ENCODE measurements at regions of chr1 and their contacts with region 1.

Region 1: GRCh38 chr1:58546520-58547308 is at the start of gene OMA1:
- DNase-seq: peak; percentile 99
- H3K4me3 ChIP-seq: peak within 1 kb of the TSS; percentile 73 to 95 (median 76)
- H3K27ac ChIP-seq: peak within 1 kb of the TSS; percentile 84
- H3K4me1 ChIP-seq: peaks cover 4% of the 10 kb centered on the region
- H3K27me3 ChIP-seq: peaks cover 3 to 4% of the 10 kb centered on the region in 2 experiments
- CTCF ChIP-seq: peak; percentile 99
- POLR2A ChIP-seq: peak; percentile 76
- total RNA-seq, gene OMA1: 4.6 and 7.7 TPM in 2 replicates

Region 2: GRCh38 chr1:56831871-56832693 is 1714.6 kb before region 1 on chr1:
- CTCF ChIA-PET with region 1: interaction called, 11 read pairs
- POLR2A ChIA-PET with region 1: no interaction called
- dilution Hi-C with region 1: no loop called
- intact Hi-C with region 1: loop called (anchors 1 kb)
- DNase-seq: peak; percentile 87
- H3K4me3 ChIP-seq: no peak overlapping the region
- H3K27ac ChIP-seq: peak overlapping the region; percentile 53
- H3K4me1 ChIP-seq: peaks cover 9% of the 10 kb centered on the region
- H3K27me3 ChIP-seq: no peaks in the 10 kb centered on the region
- CTCF ChIP-seq: peak; percentile 86 to 93
- POLR2A ChIP-seq: no peak

Region 3: GRCh38 chr1:58104960-58105359 is 441.8 kb before region 1 on chr1:
- CTCF ChIA-PET with region 1: no interaction called
- POLR2A ChIA-PET with region 1: no interaction called
- dilution Hi-C with region 1: no loop called
- intact Hi-C with region 1: no loop called
- DNase-seq: no peak
- H3K4me3 ChIP-seq: no peak overlapping the region
- H3K27ac ChIP-seq: no peak overlapping the region
- H3K4me1 ChIP-seq: no peaks in the 10 kb centered on the region
- H3K27me3 ChIP-seq: no peaks in the 10 kb centered on the region
- CTCF ChIP-seq: no peak
- POLR2A ChIP-seq: no peak

Region 4: DNA sequence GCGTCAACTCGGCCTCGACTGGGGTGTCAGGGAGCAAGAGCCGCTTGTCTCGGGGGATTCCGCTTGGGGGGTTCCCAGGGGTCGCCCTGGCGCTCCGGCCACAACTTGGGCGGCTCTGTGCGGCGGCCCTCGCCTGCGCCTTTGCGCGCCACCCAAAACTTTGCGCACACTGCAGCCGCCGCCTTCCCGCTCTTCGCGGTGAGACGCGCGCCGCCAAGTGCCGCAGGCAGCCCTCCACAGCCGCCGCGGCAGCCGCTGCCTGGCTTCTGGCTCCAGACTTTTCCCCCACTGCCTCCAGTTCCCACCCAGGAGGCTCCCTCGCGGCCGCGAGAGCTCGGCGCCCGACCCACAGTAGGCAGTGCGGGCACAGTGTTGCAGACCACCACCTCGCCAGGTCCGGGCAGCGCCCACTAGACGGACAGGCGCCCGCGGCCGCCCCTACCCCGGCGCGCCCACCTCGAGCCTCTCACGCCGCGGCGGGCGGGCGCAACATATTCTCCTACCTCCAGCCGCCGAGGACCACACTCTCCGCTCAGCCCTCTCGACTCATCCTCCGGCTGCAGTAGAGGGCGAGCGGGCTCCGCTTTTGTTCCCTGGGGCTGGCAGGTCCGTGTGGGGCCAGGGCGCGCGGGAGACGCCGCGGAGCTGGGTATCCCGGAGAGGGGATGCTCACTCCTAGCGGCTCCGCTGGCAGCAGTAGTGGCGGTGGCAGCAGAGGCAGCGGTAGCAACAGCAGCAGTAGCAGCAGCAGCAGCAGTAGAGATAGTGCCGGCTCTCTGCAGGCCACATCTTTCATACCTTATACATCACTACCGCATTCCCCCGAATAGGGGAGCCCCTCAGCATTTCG is 296.8 kb before region 1 on chr1:
- CTCF ChIA-PET with region 1: no interaction called
- POLR2A ChIA-PET with region 1: interaction called, 3 read pairs
- dilution Hi-C with region 1: no loop called
- intact Hi-C with region 1: loop called (anchors 2 kb)
- DNase-seq: peak; percentile 11
- H3K4me3 ChIP-seq: no peak overlapping the region
- H3K27ac ChIP-seq: no peak overlapping the region
- H3K4me1 ChIP-seq: no peaks in the 10 kb centered on the region
- H3K27me3 ChIP-seq: peaks cover 16 to 21% of the 10 kb centered on the region in 2 experiments
- CTCF ChIP-seq: no peak
- POLR2A ChIP-seq: no peak

Region 5: GRCh38 chr1:58266242-58266641 is 280.5 kb before region 1 on chr1:
- CTCF ChIA-PET with region 1: no interaction called
- POLR2A ChIA-PET with region 1: no interaction called
- dilution Hi-C with region 1: no loop called
- intact Hi-C with region 1: no loop called
- DNase-seq: no peak
- H3K4me3 ChIP-seq: no peak overlapping the region
- H3K27ac ChIP-seq: no peak overlapping the region
- H3K4me1 ChIP-seq: no peaks in the 10 kb centered on the region
- H3K27me3 ChIP-seq: no peaks in the 10 kb centered on the region
- CTCF ChIP-seq: no peak
- POLR2A ChIP-seq: no peak

Region 6: DNA sequence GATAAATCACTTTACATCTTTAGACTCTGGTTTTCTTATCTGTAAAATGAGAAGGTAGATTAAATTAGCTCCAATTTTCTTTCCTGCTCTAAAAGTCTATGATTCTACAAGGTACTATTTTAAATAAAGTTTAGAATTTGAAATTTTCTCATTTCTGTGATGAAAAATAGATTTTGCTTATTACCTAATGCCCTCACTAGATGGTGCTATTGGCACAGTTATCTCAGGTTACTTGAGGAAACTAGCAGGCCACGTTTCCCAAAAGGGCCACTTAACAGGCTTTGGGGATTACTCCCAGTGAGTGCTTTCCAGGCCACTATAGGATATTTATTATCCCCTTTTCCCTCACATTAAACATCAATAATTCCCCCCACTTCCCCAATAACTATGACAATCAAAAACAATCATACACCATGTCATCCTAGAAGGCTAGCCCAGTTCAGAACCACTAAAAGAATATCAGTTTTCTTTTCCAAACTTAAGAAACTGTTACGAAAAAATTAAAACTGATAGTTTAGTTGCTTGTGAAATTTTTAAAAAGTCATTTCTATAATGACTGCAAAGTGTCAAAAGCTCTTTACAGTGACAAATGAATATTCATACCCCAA is 30.8 kb before region 1 on chr1:
- CTCF ChIA-PET with region 1: interaction called, 15 read pairs
- POLR2A ChIA-PET with region 1: no interaction called
- dilution Hi-C with region 1: no loop called
- intact Hi-C with region 1: loop called (anchors 1 kb)
- DNase-seq: peak; percentile 71
- H3K4me3 ChIP-seq: no peak overlapping the region
- H3K27ac ChIP-seq: no peak overlapping the region
- H3K4me1 ChIP-seq: no peaks in the 10 kb centered on the region
- H3K27me3 ChIP-seq: no peaks in the 10 kb centered on the region
- CTCF ChIP-seq: peak; percentile 37 to 58
- POLR2A ChIP-seq: no peak

Region 7: DNA sequence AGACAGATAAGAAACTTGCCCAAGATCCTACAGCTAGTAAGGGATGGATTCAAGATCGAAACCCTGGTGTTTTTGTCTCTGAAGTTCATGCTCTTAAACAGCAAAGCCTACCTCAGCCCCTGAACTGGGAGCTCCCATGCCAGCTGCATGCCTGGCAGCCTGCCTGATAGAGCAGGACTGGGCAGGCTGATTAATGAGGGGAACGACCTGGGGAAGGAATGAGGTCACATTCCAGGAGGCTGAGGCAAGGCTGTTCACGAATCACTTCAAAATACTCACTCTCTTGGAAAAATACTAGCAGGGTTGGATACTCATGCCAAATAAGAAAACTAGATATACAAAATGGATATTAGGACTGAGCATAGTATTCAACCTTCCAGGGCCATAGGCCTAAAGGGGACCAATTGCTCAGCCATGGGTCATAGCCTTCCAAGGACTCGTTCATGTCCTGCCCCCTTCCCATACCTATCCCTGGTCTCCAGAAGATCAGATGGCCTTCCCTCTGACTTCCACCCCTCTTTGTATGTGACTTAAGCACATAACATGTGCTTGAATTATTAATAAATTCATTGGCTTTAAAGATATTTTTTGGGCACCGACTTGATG is 45.9 kb after region 1 on chr1:
- CTCF ChIA-PET with region 1: interaction called, 6 read pairs
- POLR2A ChIA-PET with region 1: no interaction called
- dilution Hi-C with region 1: no loop called
- intact Hi-C with region 1: loop called (anchors 2 kb)
- DNase-seq: peak; percentile 98
- H3K4me3 ChIP-seq: no peak overlapping the region
- H3K27ac ChIP-seq: peak overlapping the region; percentile 91
- H3K4me1 ChIP-seq: peaks cover 22% of the 10 kb centered on the region
- H3K27me3 ChIP-seq: no peaks in the 10 kb centered on the region
- CTCF ChIP-seq: no peak
- POLR2A ChIP-seq: peak; percentile 79

Region 8: DNA sequence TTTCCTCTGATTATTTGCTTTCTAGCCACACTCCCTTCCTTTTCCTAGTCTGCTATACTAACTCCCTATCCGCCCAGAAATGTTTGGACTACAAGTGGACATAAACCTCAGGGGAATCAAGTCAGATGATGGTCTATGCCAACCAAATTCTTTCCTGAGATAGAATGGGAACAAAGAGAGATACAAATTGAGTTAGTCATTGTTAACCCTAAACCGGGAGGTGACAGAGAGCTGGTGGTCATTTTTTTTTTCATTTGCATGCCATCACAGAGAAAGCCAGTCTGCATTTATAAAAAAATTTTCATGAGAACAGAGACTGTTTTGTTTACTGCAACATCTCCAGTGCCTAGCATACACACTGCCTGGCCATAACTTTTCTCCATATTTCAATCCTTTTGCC is 118.2 kb after region 1 on chr1:
- CTCF ChIA-PET with region 1: interaction called, 11 read pairs
- POLR2A ChIA-PET with region 1: no interaction called
- dilution Hi-C with region 1: no loop called
- intact Hi-C with region 1: no loop called
- DNase-seq: peak; percentile 64
- H3K4me3 ChIP-seq: no peak overlapping the region
- H3K27ac ChIP-seq: peak overlapping the region; percentile 20
- H3K4me1 ChIP-seq: peaks cover 28% of the 10 kb centered on the region
- H3K27me3 ChIP-seq: no peaks in the 10 kb centered on the region
- CTCF ChIP-seq: no peak
- POLR2A ChIP-seq: no peak

Measured in endothelial cell of umbilical vein (primary cell).